HepG2 (cell line): ENCODE measurements at regions of chr4 and their contacts with region 1.

Region 1: DNA sequence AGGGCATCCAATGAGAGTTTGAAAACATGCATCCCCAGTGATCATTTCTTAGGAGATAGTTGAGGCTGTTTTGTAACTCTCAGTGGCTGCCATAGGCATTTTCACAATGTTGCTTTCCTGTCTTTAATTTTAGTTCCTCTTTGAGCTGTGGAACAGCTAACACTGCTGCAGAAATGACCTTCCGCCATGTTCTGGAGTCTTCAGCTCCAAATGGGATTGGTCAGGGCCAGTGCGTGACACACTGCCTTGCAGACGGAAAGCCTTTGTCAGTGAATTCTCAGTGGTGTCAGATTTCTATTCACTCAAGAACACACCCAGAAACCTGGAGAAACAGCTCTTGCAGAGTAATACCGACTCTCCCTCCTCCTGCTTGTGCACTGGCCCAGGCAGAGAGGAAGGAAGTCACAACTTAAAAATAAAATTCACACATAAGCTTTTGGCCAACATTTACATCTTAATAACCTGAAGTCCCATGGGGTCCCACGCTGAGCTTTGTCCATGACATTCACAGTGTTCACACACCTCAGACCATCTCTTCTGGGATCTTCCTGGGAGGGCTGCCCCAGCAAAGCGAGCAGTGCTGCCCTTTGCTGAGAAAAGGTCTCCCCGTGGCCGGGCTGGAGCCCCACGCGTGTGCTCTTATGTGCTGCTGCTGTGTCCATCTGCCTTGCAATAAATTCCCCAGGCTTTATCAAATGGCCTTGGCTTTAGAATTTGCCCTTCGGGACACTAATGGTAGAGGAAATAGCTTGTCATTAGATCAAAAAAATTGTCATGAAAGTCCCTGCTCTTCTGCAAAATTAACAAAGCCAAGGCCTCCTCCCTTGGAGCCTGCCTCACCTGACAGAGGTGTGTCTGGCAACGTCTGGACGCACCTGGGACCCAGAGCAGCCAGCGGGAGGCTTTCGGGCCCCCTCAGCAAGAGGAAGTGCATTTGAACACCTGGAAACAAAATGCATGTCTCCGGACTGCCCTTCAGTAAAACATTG is 126.8 kb downstream of the IRF2 start:
- DNase-seq: no peak
- ATAC-seq: peak; percentile 1; the same call in 2 of the 3 replicates
- H3K4me3 ChIP-seq: peak overlapping the region; percentile 47 to 71 (median 62)
- H3K27ac ChIP-seq: peak overlapping the region; percentile 100
- H3K4me1 ChIP-seq: peaks cover 91% of the 10 kb centered on the region
- H3K27me3 ChIP-seq: no peaks in the 10 kb centered on the region
- CTCF ChIP-seq: no peak
- EP300 ChIP-seq: no peak
- POLR2A ChIP-seq: peak; percentile 25 to 37; a peak in 2 of 4 replicates
- RAD21 ChIP-seq: no peak

Region 2: GRCh38 chr4:183950536-183950935 is 397.0 kb before region 1 on chr4:
- CTCF ChIA-PET with region 1: no interaction called
- POLR2A ChIA-PET with region 1: no interaction called
- in situ Hi-C with region 1: no loop called
- intact Hi-C with region 1: no loop called
- DNase-seq: no peak
- ATAC-seq: no peak
- H3K4me3 ChIP-seq: no peak overlapping the region
- H3K27ac ChIP-seq: no peak overlapping the region
- H3K4me1 ChIP-seq: no peaks in the 10 kb centered on the region
- H3K27me3 ChIP-seq: no peaks in the 10 kb centered on the region
- CTCF ChIP-seq: no peak
- EP300 ChIP-seq: no peak
- POLR2A ChIP-seq: no peak
- RAD21 ChIP-seq: no peak

Region 3: DNA sequence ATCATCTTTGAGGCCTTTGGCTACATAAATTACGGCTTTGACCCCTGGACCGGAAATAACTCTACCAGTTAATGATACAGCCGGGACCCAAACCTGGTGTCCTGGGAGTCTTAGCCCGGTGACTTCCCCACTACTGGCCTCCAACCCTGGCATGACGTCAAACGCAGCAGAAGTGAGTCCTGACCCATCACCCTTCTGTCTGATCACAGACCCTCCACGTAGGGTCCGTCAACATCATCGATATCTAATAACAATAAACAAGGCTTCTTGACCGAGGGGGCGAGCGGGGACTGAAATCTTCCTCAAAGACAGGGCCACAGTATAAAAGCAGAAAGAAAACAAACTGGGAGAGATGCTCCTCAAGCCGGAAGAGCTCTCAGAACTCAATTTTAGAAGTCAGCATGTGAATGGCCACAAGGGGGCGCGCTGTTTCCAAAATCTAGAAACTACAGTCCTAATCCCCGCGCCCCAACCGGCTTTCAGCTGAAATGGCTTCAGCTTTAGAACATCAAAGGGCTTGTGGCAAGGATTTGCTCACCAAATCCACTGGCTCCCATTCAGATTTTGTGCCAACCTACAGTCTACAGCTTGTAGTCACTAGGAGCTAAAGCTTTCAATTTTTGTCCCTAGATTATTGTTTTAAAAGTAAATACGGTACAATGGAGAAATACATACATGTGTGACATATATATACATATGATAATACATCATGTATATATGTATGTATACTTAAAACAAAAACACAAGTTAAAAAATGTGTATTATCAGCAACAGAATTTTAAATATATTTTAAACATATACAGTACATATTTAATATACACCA is 83.4 kb before region 1 on chr4:
- CTCF ChIA-PET with region 1: no interaction called
- POLR2A ChIA-PET with region 1: interaction called, 5 read pairs
- in situ Hi-C with region 1: no loop called
- intact Hi-C with region 1: loop called (anchors 5 kb)
- DNase-seq: peak; percentile 87
- ATAC-seq: peak; percentile 84
- H3K4me3 ChIP-seq: no peak overlapping the region
- H3K27ac ChIP-seq: no peak overlapping the region
- H3K4me1 ChIP-seq: peaks cover 34% of the 10 kb centered on the region
- H3K27me3 ChIP-seq: no peaks in the 10 kb centered on the region
- CTCF ChIP-seq: peak; percentile 87
- EP300 ChIP-seq: no peak; a peak in 1 of 4 replicates
- POLR2A ChIP-seq: no peak
- RAD21 ChIP-seq: peak; percentile 87

Region 4: DNA sequence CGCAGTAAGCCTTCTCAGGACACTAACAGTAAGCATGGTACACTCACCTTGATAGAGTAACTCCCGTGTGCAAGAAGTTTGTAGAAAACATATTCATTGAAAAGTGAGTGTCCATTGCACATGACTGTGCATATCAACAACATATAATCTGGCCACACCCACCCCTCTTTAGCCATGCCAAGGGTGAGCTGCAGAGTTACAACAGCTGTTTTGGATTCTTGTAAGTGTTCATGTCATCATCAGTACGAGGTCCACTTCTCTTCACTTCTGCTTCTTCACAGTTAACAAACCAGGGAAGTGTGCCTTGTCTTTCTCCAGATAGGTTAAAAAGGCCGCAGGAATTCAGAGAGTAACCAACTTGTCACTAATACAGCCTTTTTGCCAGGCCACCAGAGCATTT is 10.2 kb after region 1 on chr4:
- CTCF ChIA-PET with region 1: no interaction called
- POLR2A ChIA-PET with region 1: interaction called, 13 read pairs
- in situ Hi-C with region 1: no loop called
- intact Hi-C with region 1: no loop called
- DNase-seq: no peak
- ATAC-seq: no peak
- H3K4me3 ChIP-seq: no peak overlapping the region
- H3K27ac ChIP-seq: no peak overlapping the region
- H3K4me1 ChIP-seq: peaks cover 64% of the 10 kb centered on the region
- H3K27me3 ChIP-seq: no peaks in the 10 kb centered on the region
- CTCF ChIP-seq: no peak
- EP300 ChIP-seq: no peak
- POLR2A ChIP-seq: no peak
- RAD21 ChIP-seq: no peak

Region 5: DNA sequence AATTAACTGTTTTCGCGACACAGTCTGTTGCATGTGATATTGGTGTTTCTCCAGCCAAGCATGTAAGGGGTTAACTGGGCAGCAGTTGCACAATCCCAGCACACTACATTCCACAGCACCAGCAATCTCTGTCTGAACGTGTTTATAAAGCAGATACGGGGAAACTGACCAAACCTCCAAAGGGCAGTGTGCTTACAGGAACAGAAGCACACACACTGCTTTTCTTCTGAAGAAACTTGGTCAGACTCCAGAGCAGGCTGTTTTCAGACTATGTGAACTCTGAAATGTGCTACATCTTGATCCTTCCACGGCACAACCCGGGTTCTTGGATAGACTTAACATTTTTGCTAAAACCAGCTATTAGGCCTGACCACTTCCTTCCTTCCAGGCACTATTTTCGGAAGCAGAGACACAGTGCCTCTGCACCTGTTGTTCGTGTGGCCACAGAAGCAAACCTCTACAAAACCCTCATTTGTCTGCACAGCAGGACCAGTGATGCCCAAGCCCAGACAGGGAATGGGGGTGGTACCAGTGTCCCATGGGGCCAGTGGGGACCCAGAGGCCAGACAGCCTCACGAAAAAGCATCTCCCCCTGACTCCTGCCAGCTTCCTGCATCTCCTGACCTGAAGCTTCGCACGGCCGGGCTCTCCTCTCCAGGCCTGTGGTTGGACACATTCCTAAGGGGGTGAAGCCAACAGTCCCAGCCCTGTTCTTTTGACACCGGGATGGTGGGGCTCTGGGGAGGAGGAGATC is 36.7 kb after region 1 on chr4:
- CTCF ChIA-PET with region 1: no interaction called
- POLR2A ChIA-PET with region 1: interaction called, 10 read pairs
- in situ Hi-C with region 1: no loop called
- intact Hi-C with region 1: loop called (anchors 1 kb)
- DNase-seq: peak; percentile 86
- ATAC-seq: peak; percentile 77
- H3K4me3 ChIP-seq: peak overlapping the region; percentile 13 to 48 (median 21); a peak in 5 of 6 replicates
- H3K27ac ChIP-seq: peak overlapping the region; percentile 63
- H3K4me1 ChIP-seq: peaks cover 61% of the 10 kb centered on the region
- H3K27me3 ChIP-seq: no peaks in the 10 kb centered on the region
- CTCF ChIP-seq: no peak
- EP300 ChIP-seq: peak; percentile 77 to 87; a peak in 3 of 4 replicates
- POLR2A ChIP-seq: peak in 1 of 2 experiments; percentile 64; a peak in 2 of 4 replicates
- RAD21 ChIP-seq: no peak

Region 6: GRCh38 chr4:184424993-184425758 is 77.6 kb after region 1 on chr4:
- CTCF ChIA-PET with region 1: no interaction called
- POLR2A ChIA-PET with region 1: no interaction called
- in situ Hi-C with region 1: no loop called
- intact Hi-C with region 1: no loop called
- DNase-seq: no peak
- ATAC-seq: no peak
- H3K4me3 ChIP-seq: no peak overlapping the region
- H3K27ac ChIP-seq: no peak overlapping the region
- H3K4me1 ChIP-seq: peaks cover 10% of the 10 kb centered on the region
- H3K27me3 ChIP-seq: no peaks in the 10 kb centered on the region
- CTCF ChIP-seq: no peak
- EP300 ChIP-seq: no peak
- POLR2A ChIP-seq: no peak
- RAD21 ChIP-seq: no peak

Region 7: DNA sequence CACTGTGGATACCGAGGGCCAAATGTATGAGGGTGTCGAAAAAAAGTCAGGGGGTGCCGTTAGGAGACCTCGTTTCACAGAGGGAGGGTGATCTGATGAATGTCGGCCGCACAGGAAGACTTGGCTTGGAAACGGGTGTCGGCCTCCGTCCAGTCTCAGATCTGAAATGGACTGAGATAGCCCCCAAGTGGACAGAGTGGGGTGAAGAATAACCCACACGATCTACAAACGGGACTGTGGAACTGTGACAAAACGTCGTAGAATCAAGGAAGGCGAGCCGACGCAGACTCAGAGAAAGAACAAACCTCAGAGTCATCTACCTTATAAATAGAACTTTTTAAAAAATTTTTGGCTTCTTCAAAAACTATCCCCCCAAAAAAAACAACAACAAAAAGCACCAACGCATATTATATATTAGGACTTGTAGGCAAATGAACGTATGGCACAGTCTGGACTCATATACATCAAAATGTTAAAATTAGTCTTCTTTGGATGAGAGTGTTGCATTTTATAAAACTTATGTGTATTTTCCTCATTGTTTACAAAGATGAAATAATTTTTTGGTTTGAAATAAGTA is 190.6 kb after region 1 on chr4:
- CTCF ChIA-PET with region 1: no interaction called
- POLR2A ChIA-PET with region 1: interaction called, 15 read pairs
- in situ Hi-C with region 1: no loop called
- intact Hi-C with region 1: no loop called
- DNase-seq: peak; percentile 85
- ATAC-seq: peak; percentile 92
- H3K4me3 ChIP-seq: peak overlapping the region; percentile 75 to 98 (median 87)
- H3K27ac ChIP-seq: peak overlapping the region; percentile 71
- H3K4me1 ChIP-seq: peaks cover 41% of the 10 kb centered on the region
- H3K27me3 ChIP-seq: no peaks in the 10 kb centered on the region; a peak in 1 of 5 replicates
- CTCF ChIP-seq: peak; percentile 92
- EP300 ChIP-seq: no peak
- POLR2A ChIP-seq: no peak
- RAD21 ChIP-seq: peak; percentile 93